Vagina (tissue), 2 donors: ENCODE measurements at regions of chr11 and their contacts with region 1.

Region 1: GRCh38 chr11:44793350-44794090 is 66.8 kb downstream of the TSPAN18 start:
- DNase-seq: no peak
- H3K4me3 ChIP-seq: no peak overlapping the region
- H3K27ac ChIP-seq: no peak overlapping the region
- H3K4me1 ChIP-seq: peaks cover 10% of the 10 kb centered on the region
- H3K27me3 ChIP-seq: no peaks in the 10 kb centered on the region
- CTCF ChIP-seq: no peak
- POLR2A ChIP-seq: no peak

Region 2: DNA sequence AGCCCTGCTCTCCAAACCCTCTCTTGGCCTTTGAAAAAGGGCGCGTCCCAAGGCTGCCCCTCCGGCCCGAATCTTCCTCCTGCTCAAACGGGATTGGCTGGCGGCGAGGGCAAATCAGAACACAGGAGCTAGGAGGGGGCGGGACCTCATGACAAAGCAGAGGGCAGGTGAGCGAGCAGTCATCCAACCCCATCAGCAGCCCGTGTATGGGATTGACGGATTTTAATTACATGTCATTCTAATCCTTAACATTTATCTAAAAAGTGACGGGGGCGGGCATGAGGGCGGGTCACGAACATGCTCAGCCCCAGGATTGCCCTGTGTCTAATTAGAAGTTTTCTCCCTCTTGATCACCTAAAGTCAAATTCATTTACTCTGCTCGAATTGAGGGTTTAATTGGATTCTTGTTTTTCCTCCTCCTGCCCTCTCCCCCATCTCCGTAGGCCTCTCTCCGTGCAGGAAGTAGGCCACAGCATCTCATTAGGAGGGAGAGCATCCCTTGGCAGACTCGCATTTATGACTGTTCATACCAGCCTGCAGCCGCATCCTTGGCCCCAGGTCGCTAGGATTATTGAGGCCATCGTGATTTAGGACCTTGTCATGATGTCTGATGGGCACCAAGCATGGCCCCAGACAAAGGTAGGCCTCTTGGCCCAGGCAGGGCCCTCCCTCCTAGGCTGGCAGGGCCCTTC is 724.8 kb after region 1 on chr11:
- intact Hi-C with region 1: loop called (anchors 10 kb)
- DNase-seq: no peak
- H3K4me3 ChIP-seq: no peak overlapping the region
- H3K27ac ChIP-seq: no peak overlapping the region
- H3K4me1 ChIP-seq: no peaks in the 10 kb centered on the region
- H3K27me3 ChIP-seq: no peaks in the 10 kb centered on the region
- CTCF ChIP-seq: no peak
- POLR2A ChIP-seq: no peak

Region 3: GRCh38 chr11:45621588-45621987 is 828.1 kb after region 1 on chr11:
- intact Hi-C with region 1: no loop called
- DNase-seq: peak in 1 of 2 donors; percentile 47
- H3K4me3 ChIP-seq: no peak overlapping the region
- H3K27ac ChIP-seq: no peak overlapping the region
- H3K4me1 ChIP-seq: no peaks in the 10 kb centered on the region
- H3K27me3 ChIP-seq: no peaks in the 10 kb centered on the region
- CTCF ChIP-seq: no peak
- POLR2A ChIP-seq: no peak

Region 4: GRCh38 chr11:46200537-46201281 is 1407.2 kb after region 1 on chr11:
- intact Hi-C with region 1: no loop called
- DNase-seq: no peak
- H3K4me3 ChIP-seq: no peak overlapping the region
- H3K27ac ChIP-seq: no peak overlapping the region
- H3K4me1 ChIP-seq: no peaks in the 10 kb centered on the region
- H3K27me3 ChIP-seq: no peaks in the 10 kb centered on the region
- CTCF ChIP-seq: no peak
- POLR2A ChIP-seq: no peak